Naive thymus-derived CD4-positive, alpha-beta T cell (primary cell): ENCODE measurements at regions of chr1 and their contacts with region 1.

Region 1: GRCh38 chr1:38859561-38860453 is at the start of gene RRAGC:
- DNase-seq: peak; percentile 92 to 98 (median 96)
- ATAC-seq: peak; percentile 99
- H3K4me3 ChIP-seq: peak within 1 kb of the TSS; percentile 70
- H3K4me3 Mint-ChIP-seq: peak within 1 kb of the TSS; percentile 92 to 99 (median 96)
- H3K27ac ChIP-seq: peak within 1 kb of the TSS; percentile 78
- H3K27ac Mint-ChIP-seq: peak within 1 kb of the TSS; percentile 76 to 98 (median 88)
- H3K4me1 ChIP-seq: peaks cover 20 to 22% of the 10 kb centered on the region in 2 donors
- H3K4me1 Mint-ChIP-seq: peaks cover 29 to 88% (median 61%) of the 10 kb centered on the region in 7 donors
- H3K27me3 ChIP-seq: no peaks in the 10 kb centered on the region
- H3K27me3 Mint-ChIP-seq: no peaks in the 10 kb centered on the region
- total RNA-seq, gene RRAGC: 14.5 to 24.4 (median 16.8) TPM

Region 2: DNA sequence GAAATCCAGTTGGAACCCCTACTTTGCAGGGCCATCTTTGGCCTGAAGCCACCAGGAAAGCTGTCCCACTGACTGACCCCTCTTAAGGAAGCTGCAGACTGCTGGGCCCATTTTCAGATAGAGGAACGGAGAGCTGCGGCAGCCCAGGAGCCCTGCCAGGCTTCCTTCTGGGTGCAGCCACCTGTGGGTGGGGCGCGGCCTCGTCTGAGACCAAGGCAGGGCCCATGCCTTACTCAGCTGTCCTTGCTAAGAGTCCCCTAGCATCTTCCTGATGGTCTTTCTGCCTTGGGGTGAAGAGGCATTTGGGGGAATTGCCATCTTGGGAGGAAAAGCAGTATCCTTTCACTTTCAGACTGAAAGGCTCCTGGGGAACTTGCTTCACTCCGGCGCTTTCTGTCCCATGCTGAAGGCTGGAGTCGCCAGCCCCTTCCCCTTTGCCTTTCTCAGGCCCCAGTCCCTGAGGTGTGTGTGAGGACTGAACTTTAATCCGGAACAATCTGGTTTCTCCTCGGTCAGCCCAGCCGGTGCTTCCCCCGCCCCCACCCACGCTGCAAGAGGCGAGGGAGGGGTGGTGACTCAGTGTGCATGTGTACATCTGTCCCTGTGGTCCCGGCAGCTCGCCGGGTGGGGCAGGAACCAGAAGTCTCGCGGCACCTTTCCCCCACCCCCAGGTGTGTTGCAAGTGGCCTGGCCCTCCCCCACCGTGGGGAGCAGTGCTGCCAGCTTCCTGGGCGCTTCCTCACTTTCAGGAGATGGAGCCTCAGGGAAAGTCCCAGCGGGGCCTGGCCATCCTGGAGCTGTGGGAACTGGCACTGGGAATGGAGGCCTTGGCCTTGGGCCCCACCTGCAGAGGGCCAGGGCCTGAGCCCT is 1380.3 kb before region 1 on chr1:
- CTCF ChIA-PET with region 1: no interaction called
- POLR2A ChIA-PET with region 1: no interaction called
- intact Hi-C with region 1: loop called (anchors 5 kb)
- DNase-seq: peak in 8 of 9 donors; percentile 54 to 90 (median 63)
- ATAC-seq: peak; percentile 69
- H3K4me3 ChIP-seq: peak overlapping the region; percentile 87
- H3K4me3 Mint-ChIP-seq: peak overlapping the region; percentile 91 to 99 (median 96)
- H3K27ac ChIP-seq: peak overlapping the region; percentile 95
- H3K27ac Mint-ChIP-seq: peak overlapping the region; percentile 96 to 99 (median 98)
- H3K4me1 ChIP-seq: peaks cover 26% of the 10 kb centered on the region in 2 donors
- H3K4me1 Mint-ChIP-seq: peaks cover 21 to 50% (median 34%) of the 10 kb centered on the region in 7 donors
- H3K27me3 ChIP-seq: no peaks in the 10 kb centered on the region
- H3K27me3 Mint-ChIP-seq: no peaks in the 10 kb centered on the region

Region 3: GRCh38 chr1:37931361-37932158 is 928.2 kb before region 1 on chr1:
- CTCF ChIA-PET with region 1: no interaction called
- POLR2A ChIA-PET with region 1: no interaction called
- intact Hi-C with region 1: loop called in 1 of 2 experiments (anchors 2 kb)
- DNase-seq: peak; percentile 92 to 97 (median 96)
- ATAC-seq: peak; percentile 100
- H3K4me3 ChIP-seq: peak overlapping the region; percentile 67
- H3K4me3 Mint-ChIP-seq: peak overlapping the region; percentile 89 to 99 (median 98)
- H3K27ac ChIP-seq: peak overlapping the region; percentile 79
- H3K27ac Mint-ChIP-seq: peak overlapping the region; percentile 78 to 94 (median 87)
- H3K4me1 ChIP-seq: peaks cover 15 to 17% of the 10 kb centered on the region in 2 donors
- H3K4me1 Mint-ChIP-seq: peaks cover 22 to 52% (median 39%) of the 10 kb centered on the region in 7 donors
- H3K27me3 ChIP-seq: no peaks in the 10 kb centered on the region
- H3K27me3 Mint-ChIP-seq: peaks cover 0 to 3% (median 0%) of the 10 kb centered on the region in 5 donors

Region 4: GRCh38 chr1:38990738-38991639 is 131.2 kb after region 1 on chr1 and contains the start of gene AKIRIN1:
- CTCF ChIA-PET with region 1: no interaction called
- POLR2A ChIA-PET with region 1: no interaction called
- intact Hi-C with region 1: loop called (anchors 1 kb)
- DNase-seq: peak; percentile 82 to 100 (median 89)
- ATAC-seq: peak; percentile 98
- H3K4me3 ChIP-seq: peak within 1 kb of the TSS; percentile 82
- H3K4me3 Mint-ChIP-seq: peak within 1 kb of the TSS; percentile 80 to 95 (median 90)
- H3K27ac ChIP-seq: peak within 1 kb of the TSS; percentile 99
- H3K27ac Mint-ChIP-seq: peak within 1 kb of the TSS; percentile 84 to 95 (median 91)
- H3K4me1 ChIP-seq: peaks cover 14 to 32% of the 10 kb centered on the region in 2 donors
- H3K4me1 Mint-ChIP-seq: peaks cover 24 to 52% (median 42%) of the 10 kb centered on the region in 7 donors
- H3K27me3 ChIP-seq: no peaks in the 10 kb centered on the region
- H3K27me3 Mint-ChIP-seq: peaks cover 0 to 4% (median 0%) of the 10 kb centered on the region in 5 donors
- total RNA-seq, gene AKIRIN1: 63.7 to 74.7 (median 70.2) TPM

Region 5: DNA sequence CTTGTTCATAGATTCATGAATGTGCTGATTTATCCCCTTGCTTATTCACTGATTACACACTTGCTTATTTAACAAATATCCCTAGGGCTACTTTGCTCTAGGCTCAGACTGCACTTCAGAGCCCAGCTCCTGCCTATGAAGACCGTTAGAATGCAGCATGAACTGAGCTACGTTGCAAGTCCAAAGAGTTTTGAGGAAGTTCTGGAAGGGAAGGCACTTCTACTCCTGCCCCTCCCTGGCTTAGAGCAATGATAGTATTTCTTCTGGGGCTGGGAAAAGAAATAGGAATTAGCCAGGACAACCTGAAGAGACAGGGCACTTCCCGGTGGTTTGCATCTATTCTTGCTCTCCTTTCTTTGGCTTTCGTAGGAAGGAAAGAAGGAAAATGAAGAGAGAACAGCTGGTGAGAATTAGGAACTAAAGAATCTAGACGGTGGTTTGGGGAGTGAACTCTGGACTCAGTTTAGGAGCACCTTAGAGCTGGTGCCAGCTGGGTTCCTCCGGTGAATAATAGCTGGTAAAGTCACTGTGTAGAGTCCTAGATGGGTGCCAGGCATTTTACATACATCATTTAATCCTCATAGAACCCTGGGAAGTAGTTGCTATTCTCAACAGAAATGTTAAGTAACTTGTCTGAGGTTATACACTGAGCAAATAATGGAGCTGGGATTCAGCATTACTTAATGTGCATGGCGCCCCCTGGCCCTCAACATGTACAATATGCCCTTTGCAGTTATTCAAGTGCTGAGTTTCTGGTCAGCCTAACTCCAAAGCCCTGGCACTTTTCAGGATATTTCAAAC is 232.2 kb after region 1 on chr1:
- CTCF ChIA-PET with region 1: interaction called, 3 read pairs
- POLR2A ChIA-PET with region 1: no interaction called
- intact Hi-C with region 1: loop called (anchors 1 to 5 kb)
- DNase-seq: peak in 8 of 9 donors; percentile 33 to 61 (median 46)
- ATAC-seq: peak; percentile 82
- H3K4me3 ChIP-seq: no peak overlapping the region
- H3K4me3 Mint-ChIP-seq: peak overlapping the region in 1 of 10 donors; percentile 51
- H3K27ac ChIP-seq: no peak overlapping the region
- H3K27ac Mint-ChIP-seq: no peak overlapping the region
- H3K4me1 ChIP-seq: no peaks in the 10 kb centered on the region
- H3K4me1 Mint-ChIP-seq: peaks cover 4 to 11% (median 5%) of the 10 kb centered on the region in 7 donors
- H3K27me3 ChIP-seq: no peaks in the 10 kb centered on the region
- H3K27me3 Mint-ChIP-seq: peaks cover 0 to 5% (median 3%) of the 10 kb centered on the region in 5 donors

Region 6: DNA sequence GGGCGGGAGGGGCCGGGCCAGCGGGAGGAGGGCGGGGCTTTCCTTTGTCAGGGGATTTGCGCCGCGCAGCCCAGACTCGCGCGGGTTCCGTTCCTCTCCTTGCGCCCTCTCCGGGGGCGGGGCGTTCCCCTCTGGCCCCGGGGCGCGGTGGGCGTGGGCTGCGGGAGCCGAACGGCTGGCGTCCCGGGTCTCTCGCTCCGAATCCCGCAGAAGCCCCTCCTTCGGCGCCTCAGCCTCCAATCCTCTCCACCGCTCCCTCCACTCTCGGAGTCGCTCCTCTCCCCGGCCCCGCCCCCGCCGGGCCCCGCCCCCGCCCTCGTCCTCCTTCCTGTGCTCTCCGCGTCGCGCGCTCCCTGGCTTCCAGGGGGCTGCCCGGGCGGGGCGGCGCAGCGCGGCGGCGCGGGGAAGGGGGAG is 548.8 kb after region 1 on chr1:
- CTCF ChIA-PET with region 1: no interaction called
- POLR2A ChIA-PET with region 1: no interaction called
- intact Hi-C with region 1: loop called in 1 of 2 experiments (anchors 10 kb)
- DNase-seq: peak; percentile 59 to 89 (median 72)
- ATAC-seq: peak; percentile 92
- H3K4me3 ChIP-seq: peak overlapping the region; percentile 54
- H3K4me3 Mint-ChIP-seq: peak overlapping the region in 8 of 10 donors; percentile 81 to 94 (median 90)
- H3K27ac ChIP-seq: peak overlapping the region; percentile 73
- H3K27ac Mint-ChIP-seq: peak overlapping the region in 2 of 9 donors; percentile 59 to 88
- H3K4me1 ChIP-seq: peaks cover 16 to 34% of the 10 kb centered on the region in 2 donors
- H3K4me1 Mint-ChIP-seq: peaks cover 36 to 69% (median 63%) of the 10 kb centered on the region in 7 donors
- H3K27me3 ChIP-seq: no peaks in the 10 kb centered on the region
- H3K27me3 Mint-ChIP-seq: no peaks in the 10 kb centered on the region